ENCODE measurements at regions of chr15 and their contacts with region 1.

Region 1: GRCh38 chr15:65069179-65069578 is 1.4 kb upstream of the RASL12 start:
- DNase-seq: no peak
- ATAC-seq: no peak
- H3K4me3 ChIP-seq: no peak overlapping the region
- H3K27ac ChIP-seq: no peak overlapping the region
- H3K4me1 ChIP-seq: peaks cover 5% of the 10 kb centered on the region; the same call in 2 of the 3 replicates
- CTCF ChIP-seq: no peak
- EP300 ChIP-seq: no peak
- POLR2A ChIP-seq: no peak
- RAD21 ChIP-seq: no peak

Region 2: GRCh38 chr15:64611085-64611725 is 458.0 kb before region 1 on chr15:
- CTCF ChIA-PET with region 1: no interaction called
- POLR2A ChIA-PET with region 1: interaction called, 10 read pairs
- DNase-seq: no peak
- ATAC-seq: peak; percentile 30 to 52; a peak in 5 of 6 replicates
- H3K4me3 ChIP-seq: no peak overlapping the region
- H3K27ac ChIP-seq: peak overlapping the region in 1 of 2 experiments; percentile 7; a peak in 2 of 6 replicates
- H3K4me1 ChIP-seq: peaks cover 19% of the 10 kb centered on the region
- CTCF ChIP-seq: no peak
- EP300 ChIP-seq: no peak
- POLR2A ChIP-seq: no peak
- RAD21 ChIP-seq: no peak

Measured in A549 (cell line).